ENCODE measurements at regions of chr2 and their contacts with region 1.

Region 1: GRCh38 chr2:180790891-180791290 is 189.5 kb upstream of the UBE2E3 start:
- DNase-seq: no peak
- H3K4me3 Mint-ChIP-seq: no peak overlapping the region
- H3K27ac Mint-ChIP-seq: peak overlapping the region; percentile 6
- H3K4me1 Mint-ChIP-seq: peaks cover 7% of the 10 kb centered on the region
- H3K27me3 Mint-ChIP-seq: no peaks in the 10 kb centered on the region
- CTCF ChIP-seq: no peak

Region 2: DNA sequence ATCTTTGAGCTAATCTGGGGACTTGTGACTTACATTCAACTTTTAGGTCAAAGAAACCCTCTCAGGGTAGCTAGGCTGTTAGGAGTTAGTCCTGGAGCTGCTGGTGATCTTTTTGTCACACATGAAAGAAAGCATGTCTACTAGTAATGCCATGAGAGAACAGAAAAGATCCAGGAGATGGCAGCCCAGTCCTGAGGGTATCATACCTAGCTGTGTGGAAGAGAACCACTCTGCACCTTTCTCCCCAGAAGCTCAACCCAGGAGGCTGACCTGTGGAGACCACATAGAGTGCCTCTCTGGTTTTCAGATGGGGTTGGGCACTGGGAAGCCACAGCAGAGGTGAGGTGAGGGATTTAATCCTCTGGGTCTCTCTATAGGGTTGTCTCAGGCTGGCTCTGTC is 270.7 kb before region 1 on chr2:
- CTCF ChIA-PET with region 1: no interaction called
- POLR2A ChIA-PET with region 1: no interaction called
- intact Hi-C with region 1: loop called (anchors 10 kb)
- DNase-seq: peak; percentile 23
- H3K4me3 Mint-ChIP-seq: no peak overlapping the region
- H3K27ac Mint-ChIP-seq: peak overlapping the region; percentile 57
- H3K4me1 Mint-ChIP-seq: peaks cover 29% of the 10 kb centered on the region
- H3K27me3 Mint-ChIP-seq: no peaks in the 10 kb centered on the region
- CTCF ChIP-seq: no peak

Region 3: GRCh38 chr2:180938451-180938850 is 147.6 kb after region 1 on chr2:
- CTCF ChIA-PET with region 1: no interaction called
- POLR2A ChIA-PET with region 1: no interaction called
- intact Hi-C with region 1: no loop called
- DNase-seq: peak; percentile 16
- H3K4me3 Mint-ChIP-seq: no peak overlapping the region
- H3K27ac Mint-ChIP-seq: no peak overlapping the region
- H3K4me1 Mint-ChIP-seq: no peaks in the 10 kb centered on the region
- H3K27me3 Mint-ChIP-seq: no peaks in the 10 kb centered on the region
- CTCF ChIP-seq: no peak